ENCODE measurements at regions of chr16 and their contacts with region 1.

Region 1: DNA sequence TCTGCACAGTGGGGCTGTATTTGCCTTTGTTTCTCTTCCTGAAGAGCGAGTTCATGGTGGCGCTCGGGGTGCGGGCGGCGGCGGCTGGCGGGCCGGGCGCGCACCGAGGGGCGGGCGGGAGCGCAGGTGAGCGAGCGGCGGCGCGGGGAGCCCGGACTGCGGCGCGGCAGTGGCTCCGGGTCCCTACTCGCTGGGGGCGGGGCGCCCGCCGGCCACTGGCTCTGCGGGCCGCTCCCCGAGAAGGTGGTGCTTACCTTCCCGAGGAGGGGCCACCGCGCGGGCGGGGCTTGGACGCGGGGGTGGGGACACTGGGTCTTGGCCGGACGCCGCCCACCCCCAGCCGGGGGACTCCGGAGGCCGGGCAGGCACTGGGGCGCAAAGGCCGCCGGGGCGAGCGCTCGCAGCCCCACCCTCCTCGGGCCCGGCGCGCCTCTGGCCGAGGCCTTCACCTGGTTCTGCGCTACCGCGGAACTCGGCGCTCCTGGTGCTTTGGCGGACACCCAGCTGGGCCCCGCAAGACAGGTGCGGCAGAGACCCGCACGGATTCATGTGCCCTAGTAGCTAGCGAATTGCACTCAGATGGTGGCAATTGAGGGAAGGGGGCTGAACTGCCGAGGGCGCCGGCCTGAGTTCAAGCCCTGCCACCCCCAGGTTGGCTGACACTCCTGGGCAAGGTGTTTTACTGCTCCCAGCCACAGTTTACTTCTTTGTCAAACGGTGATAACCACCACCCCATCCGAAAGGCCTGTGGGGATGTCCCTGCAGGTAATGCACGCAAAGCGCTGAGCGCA is at the start of gene PPL:
- DNase-seq: peak in 1 of 2 experiments; percentile 98
- H3K4me3 ChIP-seq: peak within 1 kb of the TSS; percentile 67 to 100 (median 96)
- H3K27ac ChIP-seq: peak within 1 kb of the TSS; percentile 13; the same call in 1 of the 2 replicates
- H3K4me1 ChIP-seq: peaks cover 0 to 20% (median 11%) of the 10 kb centered on the region in 4 experiments; a peak in 4 of 7 replicates
- H3K27me3 ChIP-seq: no peaks in the 10 kb centered on the region
- CTCF ChIP-seq: no peak
- EP300 ChIP-seq: peak in 1 of 2 experiments; percentile 2; a peak in 1 of 3 replicates
- POLR2A ChIP-seq: no peak
- RAD21 ChIP-seq: no peak
- total RNA-seq, gene PPL: 28.8 and 29.5 TPM in 2 replicates

Region 2: GRCh38 chr16:4892361-4893102 is 44.7 kb before region 1 on chr16:
- CTCF ChIA-PET with region 1: interaction called, 5 read pairs
- POLR2A ChIA-PET with region 1: interaction called, 15 read pairs
- DNase-seq: no peak
- H3K4me3 ChIP-seq: no peak overlapping the region
- H3K27ac ChIP-seq: no peak overlapping the region
- H3K4me1 ChIP-seq: no peaks in the 10 kb centered on the region
- H3K27me3 ChIP-seq: no peaks in the 10 kb centered on the region
- CTCF ChIP-seq: no peak
- EP300 ChIP-seq: no peak
- POLR2A ChIP-seq: no peak
- RAD21 ChIP-seq: no peak

Region 3: GRCh38 chr16:4924593-4925378 is 12.4 kb before region 1 on chr16:
- CTCF ChIA-PET with region 1: interaction called, 5 read pairs
- POLR2A ChIA-PET with region 1: interaction called, 11 read pairs
- DNase-seq: no peak
- H3K4me3 ChIP-seq: no peak overlapping the region
- H3K27ac ChIP-seq: no peak overlapping the region
- H3K4me1 ChIP-seq: peaks cover 0 to 8% (median 3%) of the 10 kb centered on the region in 4 experiments; a peak in 4 of 7 replicates
- H3K27me3 ChIP-seq: no peaks in the 10 kb centered on the region; a peak in 1 of 7 replicates
- CTCF ChIP-seq: no peak
- EP300 ChIP-seq: no peak
- POLR2A ChIP-seq: no peak
- RAD21 ChIP-seq: no peak

Region 4: DNA sequence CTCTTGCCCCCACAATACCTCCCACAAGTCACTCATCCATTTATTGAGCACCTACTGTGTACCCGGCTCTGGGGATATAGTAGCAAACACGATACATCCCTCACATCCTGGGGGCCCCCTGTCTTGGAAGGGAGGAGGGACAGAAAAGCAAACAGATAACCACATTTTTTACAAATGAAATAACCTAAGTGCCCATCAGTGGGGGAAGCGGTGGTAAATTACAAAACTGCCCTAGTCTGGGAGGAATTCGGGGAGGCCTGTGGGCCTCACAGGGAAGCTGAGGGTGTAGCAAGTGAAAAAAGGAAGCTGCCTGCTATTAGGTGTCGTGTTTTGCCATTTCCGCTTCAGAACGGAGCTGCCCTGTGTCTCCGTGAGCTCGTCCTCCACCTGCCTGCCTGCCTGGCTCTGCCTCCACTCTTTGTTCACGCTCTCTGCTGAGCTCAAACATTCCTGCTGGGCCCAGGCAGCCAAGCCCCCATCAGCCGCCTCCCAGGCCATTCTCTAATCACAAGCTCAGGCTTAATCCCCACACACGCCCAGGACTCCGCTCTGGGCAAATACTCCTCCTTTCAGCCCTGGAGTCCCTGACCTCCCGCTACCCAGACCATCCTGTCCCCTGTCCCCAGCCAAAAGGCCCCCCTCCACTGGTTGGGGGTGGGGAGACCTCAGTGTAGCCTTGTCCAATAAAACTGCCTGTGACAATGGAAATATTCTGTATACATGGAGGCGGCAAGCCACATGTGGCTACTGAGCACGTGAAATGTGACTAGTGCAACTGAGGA is 10.7 kb after region 1 on chr16:
- CTCF ChIA-PET with region 1: interaction called, 9 read pairs
- POLR2A ChIA-PET with region 1: interaction called, 17 read pairs
- DNase-seq: no peak
- H3K4me3 ChIP-seq: no peak overlapping the region; a peak in 1 of 8 replicates
- H3K27ac ChIP-seq: peak overlapping the region; percentile 54; the same call in 1 of the 2 replicates
- H3K4me1 ChIP-seq: peaks cover 15 to 38% (median 30%) of the 10 kb centered on the region in 4 experiments
- H3K27me3 ChIP-seq: no peaks in the 10 kb centered on the region
- CTCF ChIP-seq: no peak
- EP300 ChIP-seq: no peak; a peak in 1 of 3 replicates
- POLR2A ChIP-seq: peak in 1 of 2 experiments; percentile 69; a peak in 2 of 3 replicates
- RAD21 ChIP-seq: 0 out of 4 replicates have a peak, but pooled peaks of 1 of the 2 experiments have one; percentile 9

Measured in H1 (cell line).